Activated CD4-positive, alpha-beta T cell treated with anti-CD3 and anti-CD28 coated beads, Interleukin-2, amount 10 ng/mL, durations not matched to agents 7 days and 5 days (primary cell): ENCODE measurements at regions of chr5 and their contacts with region 1.

Region 1: GRCh38 chr5:39217365-39218281 is 1.7 kb downstream of the FYB1 start:
- DNase-seq: peak; percentile 86
- H3K4me3 Mint-ChIP-seq: peak overlapping the region; percentile 69
- H3K27ac Mint-ChIP-seq: peak overlapping the region; percentile 84
- H3K4me1 Mint-ChIP-seq: peaks cover 67% of the 10 kb centered on the region
- H3K27me3 Mint-ChIP-seq: no peaks in the 10 kb centered on the region

Region 2: GRCh38 chr5:39005566-39006232 is 211.9 kb before region 1 on chr5:
- CTCF ChIA-PET with region 1: no interaction called
- POLR2A ChIA-PET with region 1: no interaction called
- DNase-seq: no peak
- H3K4me3 Mint-ChIP-seq: no peak overlapping the region
- H3K27ac Mint-ChIP-seq: no peak overlapping the region
- H3K4me1 Mint-ChIP-seq: peaks cover 21% of the 10 kb centered on the region
- H3K27me3 Mint-ChIP-seq: no peaks in the 10 kb centered on the region

Region 3: DNA sequence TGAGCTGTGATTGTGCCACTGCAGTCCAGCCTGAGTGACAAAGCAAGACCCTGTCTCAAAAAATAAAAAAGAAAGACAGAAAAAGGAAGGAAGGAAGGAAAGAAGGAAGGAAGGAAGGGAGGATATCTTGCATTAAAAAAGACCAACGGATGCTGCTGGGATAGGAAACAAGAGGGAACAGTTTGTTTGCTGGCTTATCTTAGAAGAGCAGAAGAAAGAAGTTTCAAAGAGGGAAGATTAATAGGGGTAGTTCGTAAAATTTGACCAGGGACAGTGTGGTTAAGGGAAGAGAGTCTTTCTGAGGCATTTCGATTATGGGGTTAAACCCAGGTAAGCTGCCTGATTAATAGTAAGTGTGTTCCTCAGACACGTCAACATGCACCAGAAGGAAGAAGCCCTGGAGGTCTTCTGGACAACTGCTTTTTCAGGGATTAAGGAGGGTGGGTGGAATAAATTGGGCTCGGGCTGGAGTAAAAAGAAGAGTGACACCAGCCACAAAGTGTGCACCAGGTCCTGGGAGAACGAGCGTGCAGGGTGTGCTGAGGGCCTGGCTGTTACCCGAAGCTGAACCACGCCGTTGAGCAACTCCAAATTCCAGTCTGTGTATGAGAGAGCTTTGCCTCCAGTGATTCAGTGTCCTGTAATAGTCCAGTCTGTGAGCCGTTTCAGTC is 23.0 kb before region 1 on chr5:
- CTCF ChIA-PET with region 1: interaction called, 30 read pairs
- POLR2A ChIA-PET with region 1: interaction called, 7 read pairs
- DNase-seq: no peak
- H3K4me3 Mint-ChIP-seq: peak overlapping the region; percentile 81
- H3K27ac Mint-ChIP-seq: peak overlapping the region; percentile 84
- H3K4me1 Mint-ChIP-seq: peaks cover 73% of the 10 kb centered on the region
- H3K27me3 Mint-ChIP-seq: no peaks in the 10 kb centered on the region

Region 4: GRCh38 chr5:39231705-39232525 is 14.3 kb after region 1 on chr5:
- CTCF ChIA-PET with region 1: interaction called, 47 read pairs
- POLR2A ChIA-PET with region 1: interaction called, 6 read pairs
- DNase-seq: no peak
- H3K4me3 Mint-ChIP-seq: no peak overlapping the region
- H3K27ac Mint-ChIP-seq: peak overlapping the region; percentile 64
- H3K4me1 Mint-ChIP-seq: peaks cover 17% of the 10 kb centered on the region
- H3K27me3 Mint-ChIP-seq: no peaks in the 10 kb centered on the region

Region 5: GRCh38 chr5:39264528-39264927 is 46.9 kb after region 1 on chr5:
- CTCF ChIA-PET with region 1: interaction called, 19 read pairs
- POLR2A ChIA-PET with region 1: interaction called, 4 read pairs
- DNase-seq: peak; percentile 35
- H3K4me3 Mint-ChIP-seq: peak overlapping the region; percentile 3
- H3K27ac Mint-ChIP-seq: peak overlapping the region; percentile 79
- H3K4me1 Mint-ChIP-seq: peaks cover 33% of the 10 kb centered on the region
- H3K27me3 Mint-ChIP-seq: no peaks in the 10 kb centered on the region

Region 6: GRCh38 chr5:39283231-39283818 is 65.7 kb after region 1 on chr5:
- CTCF ChIA-PET with region 1: interaction called, 27 read pairs
- POLR2A ChIA-PET with region 1: interaction called, 4 read pairs
- DNase-seq: peak; percentile 83
- H3K4me3 Mint-ChIP-seq: no peak overlapping the region
- H3K27ac Mint-ChIP-seq: peak overlapping the region; percentile 47
- H3K4me1 Mint-ChIP-seq: peaks cover 31% of the 10 kb centered on the region
- H3K27me3 Mint-ChIP-seq: peaks cover 10% of the 10 kb centered on the region